Activated CD4-positive, alpha-beta memory T cell treated with anti-CD3 and anti-CD28 coated beads for 36 hours (primary cell): ENCODE measurements at regions of chr6 and their contacts with region 1.

Region 1: GRCh38 chr6:167855825-167856425 is 29.2 kb downstream of the AFDN start:
- DNase-seq: peak; percentile 26
- H3K4me3 Mint-ChIP-seq: no peak overlapping the region
- H3K27ac Mint-ChIP-seq: peak overlapping the region; percentile 58
- H3K4me1 Mint-ChIP-seq: peaks cover 25% of the 10 kb centered on the region
- H3K27me3 Mint-ChIP-seq: peaks cover 2% of the 10 kb centered on the region

Region 2: GRCh38 chr6:167424060-167424673 is 431.8 kb before region 1 on chr6:
- CTCF ChIA-PET with region 1: no interaction called
- POLR2A ChIA-PET with region 1: no interaction called
- intact Hi-C with region 1: no loop called
- DNase-seq: no peak
- H3K4me3 Mint-ChIP-seq: no peak overlapping the region
- H3K27ac Mint-ChIP-seq: no peak overlapping the region
- H3K4me1 Mint-ChIP-seq: no peaks in the 10 kb centered on the region
- H3K27me3 Mint-ChIP-seq: peaks cover 8% of the 10 kb centered on the region

Region 3: DNA sequence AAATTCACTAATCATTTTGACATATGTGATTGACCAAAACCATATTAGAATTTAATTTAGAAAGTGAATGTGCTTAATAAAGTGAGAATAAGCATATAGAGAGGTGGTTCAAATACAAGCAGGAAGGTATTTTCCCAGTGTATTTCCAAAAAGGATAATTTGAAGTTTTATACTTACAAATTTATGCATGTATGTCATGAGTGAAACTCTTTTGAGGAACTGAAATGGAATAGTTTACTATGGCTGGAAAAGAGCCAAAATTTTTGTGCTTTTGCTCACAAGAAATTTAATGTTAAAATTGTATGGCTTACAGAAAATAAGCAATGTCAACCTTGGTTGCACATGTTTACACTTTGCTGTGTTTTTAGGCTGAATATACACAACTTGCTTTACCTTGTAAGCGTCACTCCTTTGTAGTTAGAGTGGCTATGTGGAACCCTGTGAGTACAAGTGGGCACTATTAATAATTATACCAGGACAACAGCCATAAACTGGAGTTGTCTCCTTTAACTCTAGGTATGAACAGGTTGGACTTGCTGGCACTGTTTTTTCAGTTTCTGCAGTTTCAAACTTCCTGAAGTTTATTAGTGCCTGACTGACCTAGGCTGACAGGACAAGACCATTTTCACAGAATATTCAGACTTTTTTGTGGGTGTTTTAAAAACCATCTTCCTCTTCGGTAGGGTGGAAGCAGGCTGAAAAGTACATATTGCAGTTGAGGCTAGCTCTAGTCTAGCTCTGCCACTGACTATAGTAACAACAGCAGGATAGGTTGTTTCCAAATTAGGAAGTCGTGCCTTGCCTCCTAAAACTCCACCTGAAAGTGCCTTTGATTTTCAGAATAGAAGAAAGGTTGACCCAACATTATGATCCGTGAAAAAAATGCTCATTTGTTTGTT is 23.2 kb before region 1 on chr6:
- CTCF ChIA-PET with region 1: interaction called, 4 read pairs
- POLR2A ChIA-PET with region 1: interaction called, 4 read pairs
- intact Hi-C with region 1: loop called (anchors 1 kb)
- DNase-seq: no peak
- H3K4me3 Mint-ChIP-seq: peak overlapping the region; percentile 18
- H3K27ac Mint-ChIP-seq: peak overlapping the region; percentile 25
- H3K4me1 Mint-ChIP-seq: peaks cover 50% of the 10 kb centered on the region
- H3K27me3 Mint-ChIP-seq: peaks cover 43% of the 10 kb centered on the region

Region 4: GRCh38 chr6:168071336-168072019 is 215.6 kb after region 1 on chr6:
- CTCF ChIA-PET with region 1: no interaction called
- POLR2A ChIA-PET with region 1: no interaction called
- intact Hi-C with region 1: no loop called
- DNase-seq: no peak
- H3K4me3 Mint-ChIP-seq: no peak overlapping the region
- H3K27ac Mint-ChIP-seq: no peak overlapping the region
- H3K4me1 Mint-ChIP-seq: no peaks in the 10 kb centered on the region
- H3K27me3 Mint-ChIP-seq: peaks cover 2% of the 10 kb centered on the region